ENCODE measurements at regions of chr12 and their contacts with region 1.

Region 1: GRCh38 chr12:14514154-14514842 is 53.4 kb downstream of the PLBD1 start:
- DNase-seq: no peak
- ATAC-seq: peak; percentile 72
- H3K4me3 ChIP-seq: no peak overlapping the region
- H3K27ac ChIP-seq: no peak overlapping the region
- H3K4me1 ChIP-seq: no peaks in the 10 kb centered on the region
- H3K27me3 ChIP-seq: no peaks in the 10 kb centered on the region
- CTCF ChIP-seq: peak; percentile 37 to 48 (median 42); a peak in 5 of 6 replicates
- EP300 ChIP-seq: no peak
- POLR2A ChIP-seq: no peak
- RAD21 ChIP-seq: peak; percentile 79

Region 2: GRCh38 chr12:14327711-14328381 is 186.5 kb before region 1 on chr12:
- CTCF ChIA-PET with region 1: no interaction called
- POLR2A ChIA-PET with region 1: no interaction called
- RAD21 ChIA-PET with region 1: no interaction called
- SMC1A ChIA-PET with region 1: no interaction called
- in situ Hi-C with region 1: no loop called
- intact Hi-C with region 1: no loop called
- DNase-seq: no peak
- ATAC-seq: no peak
- H3K4me3 ChIP-seq: no peak overlapping the region
- H3K27ac ChIP-seq: no peak overlapping the region
- H3K4me1 ChIP-seq: no peaks in the 10 kb centered on the region
- H3K27me3 ChIP-seq: no peaks in the 10 kb centered on the region
- CTCF ChIP-seq: no peak
- EP300 ChIP-seq: no peak
- POLR2A ChIP-seq: no peak
- RAD21 ChIP-seq: no peak

Region 3: GRCh38 chr12:14716848-14717444 is 202.6 kb after region 1 on chr12:
- CTCF ChIA-PET with region 1: interaction called, 7 read pairs
- POLR2A ChIA-PET with region 1: no interaction called
- RAD21 ChIA-PET with region 1: no interaction called
- SMC1A ChIA-PET with region 1: no interaction called
- in situ Hi-C with region 1: no loop called
- intact Hi-C with region 1: loop called (anchors 2 kb)
- DNase-seq: no peak
- ATAC-seq: peak; percentile 94
- H3K4me3 ChIP-seq: no peak overlapping the region
- H3K27ac ChIP-seq: no peak overlapping the region
- H3K4me1 ChIP-seq: no peaks in the 10 kb centered on the region
- H3K27me3 ChIP-seq: no peaks in the 10 kb centered on the region
- CTCF ChIP-seq: peak; percentile 56 to 70 (median 63)
- EP300 ChIP-seq: no peak
- POLR2A ChIP-seq: no peak
- RAD21 ChIP-seq: peak; percentile 67